Stomach (tissue), 19 donors: ENCODE measurements at regions of chr2 and their contacts with region 1.

Region 1: DNA sequence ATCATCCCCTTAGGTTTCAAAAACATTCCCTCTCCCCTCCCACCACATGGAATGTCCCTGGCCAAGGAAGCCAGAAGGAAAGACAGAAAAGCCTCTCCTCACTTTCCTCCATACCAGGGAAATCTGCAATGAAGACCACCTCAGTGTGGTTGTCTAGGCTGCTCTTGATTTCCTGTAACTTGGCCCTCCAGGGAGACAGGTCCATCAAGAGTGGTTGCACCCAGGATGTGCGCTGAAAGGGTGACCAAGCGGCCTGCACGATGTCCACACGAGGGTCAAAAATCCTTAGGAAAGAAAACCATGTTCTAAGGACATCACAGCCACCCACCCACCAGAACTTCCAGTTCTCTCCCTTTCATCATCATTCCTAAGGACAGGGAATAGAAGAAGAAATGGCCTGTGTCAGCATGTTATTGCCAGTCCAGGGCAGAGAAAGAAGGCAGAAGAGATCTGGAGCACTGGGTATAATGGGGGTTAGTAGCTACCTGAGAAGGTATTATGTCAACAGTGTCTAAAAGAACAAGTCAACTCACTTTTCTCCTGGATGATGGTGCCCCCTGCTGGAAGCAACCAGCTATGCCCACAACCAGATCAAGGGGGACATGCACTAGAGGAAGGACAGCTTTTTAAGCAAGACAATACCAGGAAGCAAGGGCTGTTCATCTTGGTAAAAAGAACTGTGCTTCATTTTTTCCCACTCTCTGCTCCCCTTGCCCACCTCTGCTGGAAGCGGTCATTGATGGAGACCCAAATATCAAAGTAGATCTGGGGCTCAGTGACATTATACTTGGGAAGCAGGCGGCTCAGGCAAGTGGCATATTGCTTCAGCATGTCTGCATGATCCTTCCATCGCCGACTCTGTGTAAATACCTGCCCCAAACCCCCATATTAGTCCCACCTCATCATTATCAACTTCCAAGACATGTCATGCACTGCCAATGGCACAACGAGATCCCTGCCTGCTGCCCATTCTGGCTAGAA is 9.3 kb downstream of the GGCX start:
- DNase-seq: peak; percentile 90 to 93
- H3K4me3 ChIP-seq: no peak overlapping the region
- H3K27ac ChIP-seq: peak overlapping the region in 3 of 5 donors; percentile 30 to 99 (median 51)
- H3K4me1 ChIP-seq: peaks cover 7 to 50% (median 22%) of the 10 kb centered on the region in 4 donors
- H3K27me3 ChIP-seq: no peaks in the 10 kb centered on the region
- CTCF ChIP-seq: peak in 6 of 7 experiments; percentile 54 to 99 (median 88)
- EP300 ChIP-seq: no peak
- POLR2A ChIP-seq: no peak

Region 2: GRCh38 chr2:85420536-85421259 is 131.3 kb before region 1 on chr2:
- intact Hi-C with region 1: loop called (anchors 2 kb)
- DNase-seq: peak; percentile 95
- H3K4me3 ChIP-seq: peak overlapping the region in 2 of 4 donors; percentile 8 to 23
- H3K27ac ChIP-seq: peak overlapping the region; percentile 86 to 99 (median 97)
- H3K4me1 ChIP-seq: peaks cover 36 to 49% (median 44%) of the 10 kb centered on the region in 4 donors
- H3K27me3 ChIP-seq: no peaks in the 10 kb centered on the region
- CTCF ChIP-seq: peak in 6 of 7 experiments; percentile 99 to 100 (median 100)
- EP300 ChIP-seq: no peak
- POLR2A ChIP-seq: no peak